Right cardiac atrium (tissue), 5 donors: ENCODE measurements at regions of chr2 and their contacts with region 1.

Region 1: GRCh38 chr2:208334230-208334629 is 68.2 kb downstream of the PIKFYVE start:
- DNase-seq: no peak
- ATAC-seq: no peak
- H3K4me3 ChIP-seq: no peak overlapping the region
- H3K27ac ChIP-seq: no peak overlapping the region
- H3K4me1 ChIP-seq: no peaks in the 10 kb centered on the region
- H3K27me3 ChIP-seq: no peaks in the 10 kb centered on the region

Region 2: GRCh38 chr2:208280933-208281332 is 53.3 kb before region 1 on chr2:
- intact Hi-C with region 1: loop called in 1 of 4 experiments (anchors 10 kb)
- DNase-seq: no peak
- ATAC-seq: no peak
- H3K4me3 ChIP-seq: no peak overlapping the region
- H3K27ac ChIP-seq: no peak overlapping the region
- H3K4me1 ChIP-seq: no peaks in the 10 kb centered on the region
- H3K27me3 ChIP-seq: no peaks in the 10 kb centered on the region